Body of pancreas (tissue), 4 donors: ENCODE measurements at regions of chr3 and their contacts with region 1.

Region 1: DNA sequence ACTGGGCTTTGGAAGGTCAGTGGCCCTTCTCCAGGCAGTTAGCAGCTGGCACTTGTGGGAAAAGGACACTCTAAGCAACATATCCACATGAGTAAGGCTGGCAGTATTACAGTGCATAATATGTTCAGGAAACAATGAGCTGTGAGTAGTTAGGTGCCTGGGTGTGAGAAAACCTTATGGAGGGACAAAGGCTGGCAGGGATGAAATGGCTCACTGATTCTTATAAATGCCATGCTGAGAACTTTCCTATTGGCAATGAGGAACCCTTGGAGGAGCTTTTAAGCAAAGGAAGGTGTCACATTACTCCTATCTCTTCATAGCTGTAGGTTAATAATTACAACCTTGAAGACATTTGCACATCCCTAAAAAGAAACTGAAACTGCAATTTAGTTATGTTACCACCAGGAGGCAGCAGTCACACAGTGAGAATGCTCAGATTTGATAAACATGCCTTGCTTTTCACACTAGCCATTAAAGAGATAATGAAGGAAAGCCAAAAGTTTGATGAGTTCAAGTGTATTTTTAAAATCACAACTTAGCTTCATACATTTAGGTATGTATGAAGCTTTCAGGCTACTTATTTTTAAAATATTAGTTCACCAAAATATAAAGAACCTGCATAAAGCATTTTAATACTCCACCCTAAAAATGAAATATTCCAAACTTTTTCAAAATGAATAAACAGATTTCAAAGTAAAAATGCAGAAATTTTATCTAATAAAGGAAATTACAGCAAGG is 136.6 kb upstream of the SLC2A2 start:
- DNase-seq: no peak
- ATAC-seq: no peak
- H3K4me3 ChIP-seq: no peak overlapping the region
- H3K27ac ChIP-seq: no peak overlapping the region
- H3K4me1 ChIP-seq: no peaks in the 10 kb centered on the region
- H3K27me3 ChIP-seq: no peaks in the 10 kb centered on the region
- CTCF ChIP-seq: peak; percentile 21 to 63 (median 53)
- POLR2A ChIP-seq: no peak

Region 2: DNA sequence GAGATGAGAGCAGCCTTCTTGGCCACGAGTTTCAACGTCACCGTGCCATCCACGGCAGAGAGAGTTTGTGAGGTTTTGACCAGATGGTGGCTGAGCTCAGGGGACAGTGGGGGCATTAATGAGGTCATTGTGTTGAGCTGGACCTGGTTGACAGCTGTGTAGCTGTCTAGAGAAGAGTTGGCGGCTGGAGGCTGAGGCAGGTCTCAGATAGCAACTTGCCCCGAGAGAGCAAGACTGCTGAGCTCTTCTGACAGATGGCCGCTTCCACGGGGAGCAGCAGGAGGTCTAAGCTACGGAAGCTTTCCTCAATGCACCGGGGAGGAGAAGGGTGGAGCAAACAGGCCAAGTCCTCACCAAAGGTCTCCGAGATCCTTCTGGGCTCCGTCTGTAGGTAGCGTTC is 209.9 kb before region 1 on chr3:
- intact Hi-C with region 1: loop called (anchors 10 kb)
- DNase-seq: no peak
- ATAC-seq: no peak
- H3K4me3 ChIP-seq: no peak overlapping the region
- H3K27ac ChIP-seq: no peak overlapping the region
- H3K4me1 ChIP-seq: no peaks in the 10 kb centered on the region
- H3K27me3 ChIP-seq: no peaks in the 10 kb centered on the region
- CTCF ChIP-seq: no peak
- POLR2A ChIP-seq: no peak

Region 3: DNA sequence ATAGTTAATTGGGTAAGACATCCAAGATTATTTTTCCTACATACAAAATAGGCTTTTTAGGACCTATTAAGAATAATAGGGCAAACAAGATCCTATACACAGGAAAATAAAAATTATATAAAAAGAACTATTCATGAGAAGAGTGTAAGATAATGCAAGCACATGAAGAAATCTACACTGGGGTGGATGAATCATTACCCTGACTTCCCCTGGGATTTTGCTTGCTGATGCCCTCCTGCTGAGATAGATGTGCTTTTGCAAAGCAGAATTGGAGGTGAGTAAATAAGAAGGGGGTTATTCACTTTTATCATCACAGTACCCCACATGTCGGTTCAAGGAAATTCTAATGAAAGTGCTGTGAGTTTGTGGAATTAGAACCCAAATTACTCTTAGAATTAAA is 185.2 kb before region 1 on chr3:
- intact Hi-C with region 1: no loop called
- DNase-seq: no peak
- ATAC-seq: no peak
- H3K4me3 ChIP-seq: no peak overlapping the region
- H3K27ac ChIP-seq: peak overlapping the region in 2 of 4 donors; percentile 5 to 9
- H3K4me1 ChIP-seq: peaks cover 11% of the 10 kb centered on the region
- H3K27me3 ChIP-seq: no peaks in the 10 kb centered on the region
- CTCF ChIP-seq: no peak
- POLR2A ChIP-seq: no peak